ENCODE measurements at regions of chr3 and their contacts with region 1.

Region 1: DNA sequence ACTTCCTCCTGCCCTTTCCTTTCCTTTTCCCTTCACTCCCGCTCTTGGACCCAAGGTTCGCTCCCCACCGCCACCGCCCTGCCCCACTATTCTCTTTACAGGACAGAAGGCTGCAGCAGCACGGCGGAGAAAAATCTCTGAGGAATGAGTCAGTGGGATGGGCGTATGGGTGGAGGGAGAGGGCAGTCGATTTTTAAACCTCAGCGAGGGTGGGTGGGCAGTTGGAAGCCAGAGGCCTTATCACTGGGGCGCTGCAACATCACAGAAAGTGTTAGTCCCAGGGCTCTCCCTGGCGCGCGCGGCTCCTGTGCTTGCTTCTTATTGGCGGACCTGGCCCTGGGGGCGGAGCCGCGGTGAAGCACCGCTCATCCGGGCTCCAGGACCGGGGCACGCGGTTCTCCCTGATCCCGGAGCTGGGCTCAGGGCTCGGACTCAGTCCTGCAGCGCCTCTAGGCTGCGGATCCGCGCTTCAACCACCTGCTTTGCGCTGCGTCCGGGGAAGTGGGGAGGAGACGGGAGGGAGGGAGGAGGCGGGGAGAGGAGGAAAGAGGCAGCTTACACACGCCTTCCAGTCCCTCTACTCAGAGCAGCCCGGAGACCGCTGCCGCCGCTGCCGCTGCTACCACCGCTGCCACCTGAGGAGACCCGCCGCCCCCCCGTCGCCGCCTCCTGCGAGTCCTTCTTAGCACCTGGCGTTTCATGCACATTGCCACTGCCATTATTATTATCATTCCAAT is at the start of gene ALCAM:
- DNase-seq: peak; percentile 95
- H3K4me3 Mint-ChIP-seq: peak within 1 kb of the TSS; percentile 94
- H3K27ac Mint-ChIP-seq: peak within 1 kb of the TSS; percentile 99
- H3K4me1 Mint-ChIP-seq: peaks cover 45% of the 10 kb centered on the region
- H3K27me3 Mint-ChIP-seq: peaks cover 25% of the 10 kb centered on the region
- total RNA-seq, gene ALCAM: 26.3 and 26.5 TPM in 2 replicates

Region 2: GRCh38 chr3:105214575-105214974 is 151.9 kb before region 1 on chr3:
- intact Hi-C with region 1: no loop called
- DNase-seq: no peak
- H3K4me3 Mint-ChIP-seq: no peak overlapping the region
- H3K27ac Mint-ChIP-seq: no peak overlapping the region
- H3K4me1 Mint-ChIP-seq: no peaks in the 10 kb centered on the region
- H3K27me3 Mint-ChIP-seq: no peaks in the 10 kb centered on the region

Region 3: GRCh38 chr3:105505170-105505569 is 138.7 kb after region 1 on chr3:
- intact Hi-C with region 1: no loop called
- DNase-seq: no peak
- H3K4me3 Mint-ChIP-seq: no peak overlapping the region
- H3K27ac Mint-ChIP-seq: no peak overlapping the region
- H3K4me1 Mint-ChIP-seq: no peaks in the 10 kb centered on the region
- H3K27me3 Mint-ChIP-seq: peaks cover 1% of the 10 kb centered on the region

Region 4: DNA sequence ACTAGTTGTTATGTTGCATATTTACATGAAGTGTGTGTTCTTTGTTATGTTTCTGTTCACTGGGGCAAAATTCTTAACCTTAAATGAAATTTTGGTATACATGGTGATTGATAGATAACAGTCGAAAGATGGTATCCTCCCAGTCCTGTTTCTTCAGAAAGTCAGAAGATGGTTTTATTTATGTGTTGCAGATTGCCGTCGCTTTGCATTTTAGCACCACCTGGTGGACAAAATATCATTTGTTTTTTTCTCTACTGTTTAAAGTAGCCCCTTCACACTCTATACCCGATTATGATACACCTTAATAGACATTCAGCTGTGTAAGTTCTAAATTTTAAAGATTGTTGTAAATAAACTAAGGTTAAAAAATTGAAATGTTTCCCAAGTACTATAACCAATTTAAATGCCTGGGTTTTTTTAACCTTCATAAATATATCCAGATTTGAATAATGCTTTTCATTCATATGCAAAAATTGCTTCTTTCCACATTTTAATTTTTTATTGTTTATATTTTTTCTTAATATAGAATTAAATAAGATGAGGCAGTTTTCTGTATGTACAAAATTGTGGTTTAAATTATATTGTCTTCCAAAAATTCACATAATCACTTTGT is 152.4 kb after region 1 on chr3:
- intact Hi-C with region 1: loop called (anchors 2 kb)
- DNase-seq: peak; percentile 75
- H3K4me3 Mint-ChIP-seq: no peak overlapping the region
- H3K27ac Mint-ChIP-seq: no peak overlapping the region
- H3K4me1 Mint-ChIP-seq: peaks cover 3% of the 10 kb centered on the region
- H3K27me3 Mint-ChIP-seq: no peaks in the 10 kb centered on the region

Region 5: GRCh38 chr3:105752744-105753415 is 386.4 kb after region 1 on chr3:
- intact Hi-C with region 1: loop called (anchors 5 kb)
- DNase-seq: peak; percentile 83
- H3K4me3 Mint-ChIP-seq: peak overlapping the region; percentile 64
- H3K27ac Mint-ChIP-seq: peak overlapping the region; percentile 95
- H3K4me1 Mint-ChIP-seq: peaks cover 67% of the 10 kb centered on the region
- H3K27me3 Mint-ChIP-seq: no peaks in the 10 kb centered on the region

Region 6: GRCh38 chr3:105868742-105869530 is 502.4 kb after region 1 on chr3 and contains the start of gene CBLB:
- intact Hi-C with region 1: loop called (anchors 2 kb)
- DNase-seq: peak; percentile 95
- H3K4me3 Mint-ChIP-seq: peak within 1 kb of the TSS; percentile 93
- H3K27ac Mint-ChIP-seq: peak within 1 kb of the TSS; percentile 98
- H3K4me1 Mint-ChIP-seq: peaks cover 31% of the 10 kb centered on the region
- H3K27me3 Mint-ChIP-seq: no peaks in the 10 kb centered on the region
- total RNA-seq, gene CBLB: 177 and 183 TPM in 2 replicates

Region 7: GRCh38 chr3:106428565-106428994 is 1062.1 kb after region 1 on chr3:
- intact Hi-C with region 1: loop called (anchors 1 kb)
- DNase-seq: no peak
- H3K4me3 Mint-ChIP-seq: peak overlapping the region; percentile 25
- H3K27ac Mint-ChIP-seq: peak overlapping the region; percentile 96
- H3K4me1 Mint-ChIP-seq: peaks cover 42% of the 10 kb centered on the region
- H3K27me3 Mint-ChIP-seq: no peaks in the 10 kb centered on the region

Region 8: GRCh38 chr3:107064445-107065060 is 1698.1 kb after region 1 on chr3:
- intact Hi-C with region 1: loop called (anchors 5 kb)
- DNase-seq: peak; percentile 89
- H3K4me3 Mint-ChIP-seq: no peak overlapping the region
- H3K27ac Mint-ChIP-seq: no peak overlapping the region
- H3K4me1 Mint-ChIP-seq: peaks cover 17% of the 10 kb centered on the region
- H3K27me3 Mint-ChIP-seq: peaks cover 8% of the 10 kb centered on the region

Measured in activated CD4-positive, alpha-beta T cell treated with anti-CD3 and anti-CD28 coated beads, Interleukin-2, amount 10 ng/mL, durations not matched to agents 24 days and 14 days (primary cell).